H1 (cell line): ENCODE measurements at regions of chr22 and their contacts with region 1.

Region 1: DNA sequence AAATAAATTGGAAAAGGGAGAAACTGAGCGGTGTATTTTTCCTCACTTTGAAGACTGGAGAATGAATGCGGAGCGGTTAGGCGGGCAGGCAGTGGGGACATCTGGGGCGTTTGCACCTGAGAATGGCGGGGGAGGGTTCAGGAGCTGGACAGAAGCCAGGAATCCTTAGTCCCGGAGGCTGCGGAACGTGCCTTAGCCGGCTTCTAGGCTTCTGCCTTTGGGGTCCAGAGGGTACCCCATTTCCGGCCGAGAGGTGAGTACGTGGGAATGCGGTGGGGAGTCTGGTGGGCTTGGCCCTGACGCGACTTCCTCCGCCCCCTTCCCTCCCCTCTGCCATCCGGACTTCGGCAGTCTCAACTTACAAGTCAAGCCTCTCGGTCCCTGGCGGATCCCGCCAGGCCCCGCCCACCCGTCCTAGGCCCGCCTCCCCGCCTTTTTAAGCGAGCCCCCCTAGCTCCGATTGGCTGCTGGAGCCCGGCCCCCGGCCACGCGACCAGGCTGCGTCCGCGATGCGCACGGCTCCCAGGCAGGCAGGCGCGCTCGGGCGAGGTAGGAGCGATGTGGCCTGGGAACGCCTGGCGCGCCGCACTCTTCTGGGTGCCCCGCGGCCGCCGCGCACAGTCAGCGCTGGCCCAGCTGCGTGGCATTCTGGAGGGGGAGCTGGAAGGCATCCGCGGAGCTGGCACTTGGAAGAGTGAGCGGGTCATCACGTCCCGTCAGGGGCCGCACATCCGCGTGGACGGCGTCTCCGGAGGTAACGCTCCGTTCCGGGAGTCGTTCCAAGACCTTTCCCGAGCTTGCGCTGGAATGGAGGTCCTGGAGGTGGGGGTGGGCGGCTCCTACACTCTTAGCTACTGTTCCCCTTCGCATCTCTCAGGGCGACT is at the start of gene GCAT:
- DNase-seq: peak; percentile 92 to 95
- H3K4me3 ChIP-seq: peak within 1 kb of the TSS; percentile 79 to 91 (median 86)
- H3K27ac ChIP-seq: no peak within 1 kb of the TSS
- H3K4me1 ChIP-seq: peaks cover 0 to 22% (median 16%) of the 10 kb centered on the region in 4 experiments; a peak in 5 of 7 replicates
- H3K27me3 ChIP-seq: peaks cover 3 to 40% (median 35%) of the 10 kb centered on the region in 4 experiments
- CTCF ChIP-seq: no peak
- EP300 ChIP-seq: no peak
- POLR2A ChIP-seq: peak; percentile 25 to 78
- RAD21 ChIP-seq: no peak
- total RNA-seq, gene GCAT: 24.3 and 24.5 TPM in 2 replicates

Region 2: DNA sequence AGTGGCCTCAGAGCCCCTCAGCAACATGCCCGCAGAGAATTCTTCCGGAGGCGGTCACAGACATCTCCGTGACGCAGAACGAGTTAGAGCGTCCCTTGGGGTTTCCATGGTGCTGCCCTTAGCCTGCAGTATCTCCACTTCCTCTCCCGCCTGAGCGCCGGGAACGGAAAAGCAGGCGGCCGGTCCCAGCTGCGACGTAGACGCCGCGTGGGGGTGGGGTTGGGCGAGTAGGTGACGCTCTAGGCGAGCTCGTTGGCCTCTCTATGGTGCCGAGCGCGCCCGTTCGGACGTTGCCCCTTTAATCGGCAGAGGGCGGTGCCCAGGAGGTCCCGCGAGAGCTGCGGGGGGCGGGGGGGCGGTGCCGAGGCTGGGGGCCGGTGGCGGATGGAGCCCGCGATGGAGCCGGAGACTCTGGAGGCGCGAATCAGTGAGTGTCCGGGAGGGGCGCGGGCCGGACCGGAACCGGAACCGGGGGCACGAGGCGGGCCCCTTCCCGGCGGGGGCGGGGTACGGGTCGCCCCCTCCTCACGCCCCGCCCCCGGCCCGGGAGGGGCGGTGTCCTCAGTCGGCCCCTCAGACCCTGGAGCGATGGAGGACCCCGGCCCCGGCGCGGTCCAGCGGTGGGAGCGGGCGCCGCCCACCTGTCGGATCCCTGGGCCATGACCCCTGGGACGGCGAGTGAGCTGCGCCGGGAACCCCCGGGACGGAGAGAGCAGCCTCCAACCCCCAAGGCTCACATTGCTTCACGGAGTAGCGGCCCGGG is 199.0 kb before region 1 on chr22 and contains the start of gene GGA1:
- CTCF ChIA-PET with region 1: no interaction called
- POLR2A ChIA-PET with region 1: interaction called, 19 read pairs
- DNase-seq: peak; percentile 83 to 90
- H3K4me3 ChIP-seq: peak within 1 kb of the TSS; percentile 69 to 91 (median 82)
- H3K27ac ChIP-seq: peak within 1 kb of the TSS; percentile 93
- H3K4me1 ChIP-seq: peaks cover 0 to 8% (median 6%) of the 10 kb centered on the region in 4 experiments; a peak in 6 of 7 replicates
- H3K27me3 ChIP-seq: no peaks in the 10 kb centered on the region
- CTCF ChIP-seq: no peak; a peak in 1 of 4 replicates
- EP300 ChIP-seq: 0 out of 3 replicates have a peak, but pooled peaks of 1 of the 2 experiments have one; percentile 9
- POLR2A ChIP-seq: peak; percentile 35 to 83
- RAD21 ChIP-seq: no peak
- total RNA-seq, gene GGA1: 46.5 and 49.3 TPM in 2 replicates

Region 3: DNA sequence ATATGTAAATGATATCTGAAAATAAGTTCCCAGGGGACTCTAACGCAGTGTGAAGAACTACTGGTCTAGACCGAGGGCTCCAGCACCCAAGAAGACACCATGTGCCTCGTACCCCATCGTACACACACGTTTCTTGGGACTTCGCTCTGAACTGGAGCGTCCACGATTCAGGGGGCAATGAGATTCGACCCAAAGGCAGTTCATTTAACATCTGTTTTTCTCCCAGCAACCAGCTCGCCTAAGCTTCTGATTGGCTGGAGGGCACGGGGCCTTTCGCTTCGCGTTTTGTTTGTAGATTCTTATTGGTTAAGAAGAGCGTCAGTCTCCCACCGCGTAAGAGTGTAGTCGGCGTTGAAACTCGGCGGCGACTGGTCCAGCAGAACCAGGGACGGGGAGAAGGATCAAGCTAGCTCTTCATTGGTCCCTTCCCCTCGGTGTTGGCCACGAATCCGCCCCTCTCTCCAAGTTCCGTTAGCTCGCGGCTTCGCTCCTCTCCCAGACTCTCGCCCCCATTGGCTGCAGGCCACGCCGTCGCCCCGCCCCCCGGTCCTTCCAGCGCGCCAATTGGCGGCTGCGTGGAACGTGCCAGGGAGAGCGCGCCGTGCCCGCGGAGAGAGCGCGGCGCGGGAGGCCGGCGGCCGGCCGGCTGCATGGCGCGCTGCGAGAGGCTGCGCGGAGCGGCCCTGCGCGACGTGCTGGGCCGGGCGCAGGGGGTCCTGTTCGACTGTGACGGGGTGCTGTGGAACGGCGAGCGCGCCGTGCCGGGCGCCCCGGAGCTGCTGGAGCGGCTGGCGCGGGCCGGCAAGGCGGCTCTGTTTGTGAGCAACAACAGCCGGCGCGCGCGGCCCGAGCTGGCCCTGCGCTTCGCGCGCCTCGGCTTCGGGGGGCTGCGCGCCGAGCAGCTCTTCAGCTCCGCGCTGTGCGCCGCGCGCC is 149.3 kb before region 1 on chr22 and contains the start of gene PDXP:
- CTCF ChIA-PET with region 1: no interaction called
- POLR2A ChIA-PET with region 1: interaction called, 11 read pairs
- DNase-seq: peak; percentile 98 to 99
- H3K4me3 ChIP-seq: peak within 1 kb of the TSS; percentile 71 to 94 (median 76)
- H3K27ac ChIP-seq: no peak within 1 kb of the TSS
- H3K4me1 ChIP-seq: peaks cover 0 to 21% (median 6%) of the 10 kb centered on the region in 4 experiments; a peak in 5 of 7 replicates
- H3K27me3 ChIP-seq: no peaks in the 10 kb centered on the region
- CTCF ChIP-seq: no peak
- EP300 ChIP-seq: no peak
- POLR2A ChIP-seq: peak in 1 of 2 experiments; percentile 63; a peak in 2 of 3 replicates
- RAD21 ChIP-seq: no peak
- total RNA-seq, gene PDXP: 35.7 and 36.6 TPM in 2 replicates

Region 4: DNA sequence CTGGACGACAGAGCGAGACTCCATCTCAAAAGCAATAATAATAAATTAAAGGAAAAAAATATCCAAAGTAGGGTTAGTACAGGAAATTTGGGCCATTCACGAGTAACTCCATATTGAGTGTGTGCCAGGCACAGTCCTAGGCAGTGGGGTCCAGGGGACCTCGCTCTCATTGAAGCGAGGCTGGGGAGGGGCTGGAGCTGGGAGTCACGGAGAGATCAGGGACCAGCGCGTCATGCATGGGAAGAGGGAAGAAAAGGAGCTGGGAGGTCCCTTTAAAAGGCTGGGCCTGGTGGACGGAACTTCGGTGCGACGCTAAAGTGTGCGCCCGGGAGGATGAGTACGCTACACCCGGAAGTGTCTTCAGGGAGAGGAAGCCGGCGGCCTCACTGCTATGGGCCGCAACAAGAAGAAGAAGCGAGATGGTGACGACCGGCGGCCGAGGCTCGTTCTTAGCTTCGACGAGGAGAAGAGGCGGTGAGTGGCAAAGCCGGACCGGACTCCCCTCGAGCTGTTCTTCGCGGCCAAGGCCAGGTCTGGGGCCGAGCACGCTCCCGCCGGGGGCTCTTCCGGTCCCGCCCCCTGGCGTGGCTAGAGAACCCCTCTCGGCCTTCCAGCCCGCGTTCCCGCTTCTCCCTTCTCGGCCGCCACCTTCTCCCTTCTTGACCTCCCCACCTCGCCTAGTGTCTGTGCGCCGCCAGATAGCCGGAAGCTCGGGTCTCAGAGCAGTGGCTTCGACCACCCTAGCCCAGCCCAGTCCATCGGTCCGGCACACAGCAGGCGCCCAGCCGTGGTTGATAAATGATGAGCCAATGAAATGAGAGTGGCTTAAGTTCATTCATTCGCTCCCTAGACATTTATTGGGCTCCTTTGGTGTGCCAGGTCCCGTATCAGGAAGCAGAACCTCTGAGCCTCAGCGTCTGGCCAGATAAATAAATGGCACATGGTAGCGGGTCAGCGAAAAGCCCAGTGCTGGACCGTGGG is 121.4 kb before region 1 on chr22 and contains the start of gene NOL12:
- CTCF ChIA-PET with region 1: no interaction called
- POLR2A ChIA-PET with region 1: interaction called, 12 read pairs
- DNase-seq: peak; percentile 69 to 91
- H3K4me3 ChIP-seq: peak within 1 kb of the TSS; percentile 62 to 97 (median 87)
- H3K27ac ChIP-seq: peak within 1 kb of the TSS; percentile 88
- H3K4me1 ChIP-seq: peaks cover 0 to 6% (median 2%) of the 10 kb centered on the region in 4 experiments; a peak in 4 of 7 replicates
- H3K27me3 ChIP-seq: no peaks in the 10 kb centered on the region
- CTCF ChIP-seq: no peak
- EP300 ChIP-seq: no peak
- POLR2A ChIP-seq: peak in 1 of 2 experiments; percentile 88; a peak in 2 of 3 replicates
- RAD21 ChIP-seq: no peak
- total RNA-seq, gene NOL12: 26.7 and 28.3 TPM in 2 replicates

Region 5: DNA sequence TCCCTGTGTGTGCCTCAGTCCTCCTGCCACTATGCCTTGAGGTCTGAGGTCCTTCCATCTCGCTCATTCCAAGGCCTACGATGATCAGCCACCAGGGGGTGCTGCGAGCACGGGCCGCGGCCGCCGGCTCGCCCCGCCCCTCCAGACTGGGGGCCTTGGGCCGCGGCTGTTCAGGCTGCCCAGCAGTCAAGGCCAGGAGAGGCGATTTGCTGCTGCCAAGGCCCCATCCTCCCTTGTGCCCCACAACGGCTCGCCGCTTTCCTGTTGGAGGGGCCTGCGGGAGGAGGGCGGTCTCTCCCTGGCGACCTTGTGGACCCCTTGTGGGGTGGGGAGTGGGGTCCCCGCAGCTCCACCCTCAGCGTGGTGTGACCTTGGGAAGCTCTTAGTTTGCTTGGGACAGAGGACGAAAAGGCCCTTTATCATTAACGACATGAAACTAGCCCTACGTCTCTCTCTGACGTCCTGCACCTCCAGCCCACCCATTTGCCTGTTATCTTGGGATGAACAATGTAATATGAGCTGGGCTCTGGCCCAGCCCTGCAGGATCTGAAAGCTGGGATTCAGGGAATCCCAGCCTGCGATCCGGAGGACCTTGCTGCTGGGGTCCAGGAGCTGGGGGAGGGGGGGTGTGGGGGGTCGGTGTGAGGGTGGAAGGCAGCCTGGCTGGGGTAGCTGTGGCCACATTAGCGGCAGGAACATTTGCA is 10.2 kb after region 1 on chr22:
- CTCF ChIA-PET with region 1: interaction called, 42 read pairs
- POLR2A ChIA-PET with region 1: interaction called, 142 read pairs
- DNase-seq: peak in 1 of 2 experiments; percentile 99
- H3K4me3 ChIP-seq: peak overlapping the region; percentile 35 to 60 (median 47)
- H3K27ac ChIP-seq: peak overlapping the region; percentile 44; the same call in 1 of the 2 replicates
- H3K4me1 ChIP-seq: peaks cover 3 to 25% (median 19%) of the 10 kb centered on the region in 4 experiments
- H3K27me3 ChIP-seq: peaks cover 0 to 23% (median 20%) of the 10 kb centered on the region in 4 experiments; a peak in 6 of 7 replicates
- CTCF ChIP-seq: peak; percentile 90 to 94 (median 93)
- EP300 ChIP-seq: no peak
- POLR2A ChIP-seq: peak in 1 of 2 experiments; percentile 60; a peak in 1 of 3 replicates
- RAD21 ChIP-seq: peak; percentile 91 to 92

Region 6: GRCh38 chr22:37824674-37825641 is 17.3 kb after region 1 on chr22:
- CTCF ChIA-PET with region 1: interaction called, 42 read pairs
- POLR2A ChIA-PET with region 1: interaction called, 142 read pairs
- DNase-seq: peak in 1 of 2 experiments; percentile 72
- H3K4me3 ChIP-seq: peak overlapping the region; percentile 24 to 57 (median 44)
- H3K27ac ChIP-seq: no peak overlapping the region
- H3K4me1 ChIP-seq: peaks cover 5 to 25% (median 15%) of the 10 kb centered on the region in 4 experiments
- H3K27me3 ChIP-seq: peaks cover 8 to 30% (median 25%) of the 10 kb centered on the region in 4 experiments
- CTCF ChIP-seq: peak; percentile 55 to 78 (median 58)
- EP300 ChIP-seq: no peak
- POLR2A ChIP-seq: peak in 1 of 2 experiments; percentile 40; a peak in 1 of 3 replicates
- RAD21 ChIP-seq: peak in 1 of 2 experiments; percentile 26; a peak in 1 of 4 replicates

Region 7: GRCh38 chr22:37910890-37911743 is 103.5 kb after region 1 on chr22:
- CTCF ChIA-PET with region 1: interaction called, 5 read pairs
- POLR2A ChIA-PET with region 1: interaction called, 10 read pairs
- DNase-seq: no peak
- H3K4me3 ChIP-seq: no peak overlapping the region
- H3K27ac ChIP-seq: no peak overlapping the region
- H3K4me1 ChIP-seq: peaks cover 0 to 26% (median 15%) of the 10 kb centered on the region in 4 experiments; a peak in 6 of 7 replicates
- H3K27me3 ChIP-seq: no peaks in the 10 kb centered on the region
- CTCF ChIP-seq: no peak
- EP300 ChIP-seq: no peak
- POLR2A ChIP-seq: peak in 1 of 2 experiments; percentile 27; a peak in 1 of 3 replicates
- RAD21 ChIP-seq: no peak